ENCODE measurements at regions of chrX and their contacts with region 1.

Region 1: GRCh38 chrX:150772150-150772970 is 79.2 kb downstream of the MTMR1 start:
- DNase-seq: peak; percentile 85
- ATAC-seq: peak; percentile 95

Region 2: GRCh38 chrX:150607201-150607600 is 165.2 kb before region 1 on chrX:
- intact Hi-C with region 1: no loop called
- DNase-seq: no peak
- ATAC-seq: no peak

Region 3: DNA sequence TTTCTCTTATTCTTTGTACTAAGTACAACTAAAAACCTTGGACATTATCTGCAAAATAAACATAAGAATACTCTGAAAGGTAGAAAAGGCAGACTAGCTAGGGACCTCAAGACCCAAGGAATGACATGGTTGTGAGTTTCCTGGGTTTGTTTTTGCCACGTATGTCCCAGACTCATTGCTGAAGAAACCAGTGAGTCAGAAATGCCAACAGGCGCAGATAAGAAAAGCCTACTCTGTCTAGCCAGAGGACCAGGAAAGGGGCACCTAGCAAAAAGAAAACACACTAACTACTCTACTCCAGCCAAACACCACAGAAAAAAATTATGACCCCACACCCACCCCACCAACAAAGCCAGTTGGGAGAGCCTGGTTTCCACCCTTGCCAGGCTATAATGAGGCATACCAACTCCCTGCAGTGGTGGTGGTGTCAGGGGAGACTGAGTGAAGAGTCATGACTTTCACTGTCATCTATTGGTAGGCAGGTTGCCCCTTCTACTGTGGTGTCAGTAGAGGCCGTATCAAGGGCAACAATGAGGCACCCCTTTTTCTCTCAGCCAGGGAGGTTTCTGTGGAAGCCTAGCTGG is 68.2 kb before region 1 on chrX:
- intact Hi-C with region 1: no loop called
- DNase-seq: no peak
- ATAC-seq: no peak

Region 4: DNA sequence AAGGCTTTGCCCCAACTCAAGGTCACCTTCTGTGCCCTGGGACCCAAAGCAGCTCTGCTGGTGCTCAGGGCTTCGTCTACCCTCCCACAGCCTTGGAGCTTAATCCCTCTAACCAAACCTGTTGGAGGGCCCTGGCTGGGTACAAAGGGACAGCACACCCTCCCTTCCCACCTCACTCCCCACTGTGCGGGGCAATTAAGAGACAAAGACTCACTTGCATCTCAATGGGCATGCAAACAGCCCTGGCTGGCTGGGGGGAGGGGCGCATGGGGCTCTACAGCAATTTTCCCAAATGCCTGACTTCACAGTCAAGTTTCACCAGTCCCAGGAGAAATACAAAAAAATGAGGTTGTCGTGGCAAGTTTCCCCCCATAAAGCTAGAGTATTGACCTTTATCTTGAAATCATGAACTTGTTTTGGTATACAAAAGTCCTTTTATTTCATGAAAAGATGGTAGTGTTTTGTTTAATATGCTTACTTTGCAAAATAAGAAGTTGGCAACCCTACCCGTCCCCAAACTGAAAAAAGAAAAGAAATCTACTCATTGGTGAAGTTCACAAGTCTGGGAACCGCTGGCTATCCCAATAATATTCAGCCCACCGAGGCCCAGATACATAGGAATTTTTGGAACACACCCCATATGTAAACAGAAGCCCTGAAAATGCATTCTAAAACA is 130.2 kb after region 1 on chrX:
- intact Hi-C with region 1: loop called (anchors 10 kb)
- DNase-seq: no peak
- ATAC-seq: no peak

Region 5: GRCh38 chrX:151004082-151004481 is 231.7 kb after region 1 on chrX:
- intact Hi-C with region 1: loop called (anchors 10 kb)
- DNase-seq: no peak
- ATAC-seq: no peak

Region 6: GRCh38 chrX:151081016-151081415 is 308.7 kb after region 1 on chrX:
- intact Hi-C with region 1: loop called (anchors 1 kb)
- DNase-seq: no peak
- ATAC-seq: no peak

Measured in Right ventricle myocardium superior (tissue), 1 donor.